ENCODE measurements at regions of chr2 and their contacts with region 1.

Region 1: DNA sequence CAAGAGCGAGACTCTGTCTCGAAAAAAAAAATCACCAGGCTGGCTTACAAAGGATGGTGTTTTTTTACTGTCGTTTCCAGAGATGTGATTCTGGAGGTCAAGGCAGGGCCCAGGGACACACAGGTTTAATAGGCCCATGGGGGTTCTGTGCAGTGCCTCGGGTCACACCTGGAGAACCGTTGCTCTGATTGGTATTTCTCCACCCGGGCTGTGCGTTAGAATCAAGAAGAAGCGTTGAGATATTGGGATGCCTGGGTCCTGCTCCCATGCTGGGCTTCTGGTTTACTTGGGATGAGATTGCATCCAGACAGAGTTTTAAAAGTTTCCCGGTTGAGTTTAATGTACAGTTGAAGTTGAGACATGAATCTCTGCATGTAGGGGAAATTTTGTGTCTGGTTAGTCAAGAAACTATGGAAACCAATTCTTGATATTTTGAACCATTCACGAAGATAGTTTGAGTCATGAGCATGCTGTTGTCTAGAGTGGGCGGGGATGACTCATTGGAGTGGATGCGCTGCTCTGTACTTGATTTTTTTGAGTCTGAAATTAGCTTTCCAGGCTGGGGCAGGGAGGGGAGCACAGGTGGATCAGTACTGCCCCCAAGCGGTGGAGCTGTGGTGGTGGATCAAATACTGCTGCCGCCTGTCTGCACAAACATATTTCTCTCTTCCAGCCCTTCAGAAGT is 50.1 kb downstream of the GREB1 start:
- DNase-seq: peak; percentile 23 to 66 (median 34)
- H3K4me3 ChIP-seq: no peak overlapping the region
- H3K4me3 Mint-ChIP-seq: peak overlapping the region in 1 of 8 donors; percentile 28
- H3K27ac ChIP-seq: no peak overlapping the region
- H3K27ac Mint-ChIP-seq: no peak overlapping the region
- H3K4me1 ChIP-seq: no peaks in the 10 kb centered on the region
- H3K4me1 Mint-ChIP-seq: peaks cover 0 to 3% (median 0%) of the 10 kb centered on the region in 4 donors
- H3K27me3 ChIP-seq: no peaks in the 10 kb centered on the region
- H3K27me3 Mint-ChIP-seq: peaks cover 8 to 14% of the 10 kb centered on the region in 2 donors

Region 2: GRCh38 chr2:11573418-11574175 is 10.4 kb before region 1 on chr2:
- CTCF ChIA-PET with region 1: interaction called, 16 read pairs
- POLR2A ChIA-PET with region 1: no interaction called
- intact Hi-C with region 1: no loop called
- DNase-seq: no peak
- H3K4me3 ChIP-seq: no peak overlapping the region
- H3K4me3 Mint-ChIP-seq: no peak overlapping the region
- H3K27ac ChIP-seq: no peak overlapping the region
- H3K27ac Mint-ChIP-seq: no peak overlapping the region
- H3K4me1 ChIP-seq: no peaks in the 10 kb centered on the region
- H3K4me1 Mint-ChIP-seq: no peaks in the 10 kb centered on the region
- H3K27me3 ChIP-seq: no peaks in the 10 kb centered on the region
- H3K27me3 Mint-ChIP-seq: peaks cover 3 to 8% of the 10 kb centered on the region in 2 donors

Region 3: DNA sequence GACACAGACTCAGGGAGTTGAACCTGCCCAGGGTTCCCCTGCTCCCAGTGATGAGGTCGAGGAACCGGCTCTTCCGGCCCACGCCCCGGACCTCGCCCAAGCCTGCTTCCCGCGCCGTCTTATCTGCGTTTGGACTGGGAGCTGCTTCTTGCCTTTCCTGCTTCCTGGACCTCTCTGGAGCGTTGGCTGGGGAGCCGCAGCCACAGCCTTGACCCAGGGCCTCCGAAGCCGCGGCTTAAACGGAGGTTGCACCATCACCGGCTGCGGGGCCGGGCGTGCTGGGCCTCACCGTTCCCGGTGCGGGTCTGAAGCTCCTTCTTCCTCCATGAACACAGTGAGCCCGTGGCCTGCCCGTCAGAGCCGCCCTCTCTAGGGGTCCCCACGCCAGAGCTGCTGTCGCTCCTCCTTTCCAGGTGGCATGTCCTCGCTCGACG is 72.7 kb after region 1 on chr2:
- CTCF ChIA-PET with region 1: no interaction called
- POLR2A ChIA-PET with region 1: no interaction called
- intact Hi-C with region 1: no loop called
- DNase-seq: no peak
- H3K4me3 ChIP-seq: no peak overlapping the region
- H3K4me3 Mint-ChIP-seq: no peak overlapping the region
- H3K27ac ChIP-seq: no peak overlapping the region
- H3K27ac Mint-ChIP-seq: peak overlapping the region in 1 of 7 donors; percentile 25
- H3K4me1 ChIP-seq: no peaks in the 10 kb centered on the region
- H3K4me1 Mint-ChIP-seq: no peaks in the 10 kb centered on the region
- H3K27me3 ChIP-seq: no peaks in the 10 kb centered on the region
- H3K27me3 Mint-ChIP-seq: peaks cover 12 to 13% of the 10 kb centered on the region in 2 donors